PC-9 (cell line): ENCODE measurements at regions of chr13 and their contacts with region 1.

Region 1: DNA sequence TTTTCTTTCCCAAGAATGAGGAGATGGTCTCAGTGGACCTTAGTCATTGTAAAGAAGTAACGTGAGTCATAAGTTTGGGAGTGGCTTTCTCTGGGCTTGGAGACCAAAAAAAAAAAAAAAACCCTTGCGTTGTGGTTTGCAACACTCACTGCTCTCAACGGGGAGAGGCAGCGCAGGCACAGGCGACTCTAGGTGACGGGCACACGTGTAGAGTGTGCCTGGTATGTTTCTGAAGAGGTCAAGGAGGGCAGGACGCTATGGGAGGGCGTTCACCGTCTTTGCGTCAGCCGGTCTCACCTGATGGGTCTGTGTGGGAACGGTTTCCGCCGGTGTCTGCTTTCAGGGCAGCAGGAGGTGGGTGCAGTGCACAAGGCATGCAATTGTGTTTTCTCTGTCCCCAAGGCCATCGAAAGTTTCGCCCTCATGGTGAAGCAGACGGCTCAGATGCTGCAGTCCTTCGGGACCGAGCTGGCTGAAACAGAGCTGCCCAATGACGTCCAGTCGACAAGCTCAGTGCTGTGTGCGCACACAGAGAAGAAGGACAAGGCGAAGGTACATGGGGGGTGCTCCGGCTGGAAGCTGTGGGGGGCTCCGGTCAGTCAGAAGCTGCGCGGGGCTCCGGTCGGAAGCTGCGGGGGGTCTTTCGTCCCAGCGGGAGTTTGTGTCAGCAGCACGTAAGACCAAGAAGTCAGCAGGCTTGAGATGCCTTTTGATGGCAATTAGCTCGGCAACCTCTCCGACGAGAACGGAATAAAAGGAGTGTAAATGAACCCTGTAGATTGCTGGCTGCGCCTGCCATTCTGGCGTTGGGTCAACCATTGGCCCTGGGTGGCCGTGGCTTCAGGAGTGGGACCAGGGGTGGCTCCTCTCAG is 40.8 kb upstream of the F7 start:
- DNase-seq: peak; percentile 78 to 95
- H3K4me3 ChIP-seq: peak overlapping the region; percentile 18; the same call in 1 of the 2 replicates
- H3K27ac ChIP-seq: peak overlapping the region; percentile 69
- H3K4me1 ChIP-seq: peaks cover 13% of the 10 kb centered on the region
- H3K27me3 ChIP-seq: no peaks in the 10 kb centered on the region
- CTCF ChIP-seq: no peak

Region 2: GRCh38 chr13:112241288-112241687 is 823.5 kb before region 1 on chr13:
- CTCF ChIA-PET with region 1: no interaction called
- POLR2A ChIA-PET with region 1: no interaction called
- intact Hi-C with region 1: no loop called
- DNase-seq: no peak
- H3K4me3 ChIP-seq: no peak overlapping the region
- H3K27ac ChIP-seq: no peak overlapping the region
- H3K4me1 ChIP-seq: no peaks in the 10 kb centered on the region
- H3K27me3 ChIP-seq: peaks cover 95% of the 10 kb centered on the region
- CTCF ChIP-seq: no peak

Region 3: GRCh38 chr13:112910616-112911364 is 154.0 kb before region 1 on chr13:
- CTCF ChIA-PET with region 1: no interaction called
- POLR2A ChIA-PET with region 1: no interaction called
- intact Hi-C with region 1: no loop called
- DNase-seq: no peak
- H3K4me3 ChIP-seq: no peak overlapping the region
- H3K27ac ChIP-seq: no peak overlapping the region
- H3K4me1 ChIP-seq: no peaks in the 10 kb centered on the region
- H3K27me3 ChIP-seq: peaks cover 99% of the 10 kb centered on the region
- CTCF ChIP-seq: no peak

Region 4: DNA sequence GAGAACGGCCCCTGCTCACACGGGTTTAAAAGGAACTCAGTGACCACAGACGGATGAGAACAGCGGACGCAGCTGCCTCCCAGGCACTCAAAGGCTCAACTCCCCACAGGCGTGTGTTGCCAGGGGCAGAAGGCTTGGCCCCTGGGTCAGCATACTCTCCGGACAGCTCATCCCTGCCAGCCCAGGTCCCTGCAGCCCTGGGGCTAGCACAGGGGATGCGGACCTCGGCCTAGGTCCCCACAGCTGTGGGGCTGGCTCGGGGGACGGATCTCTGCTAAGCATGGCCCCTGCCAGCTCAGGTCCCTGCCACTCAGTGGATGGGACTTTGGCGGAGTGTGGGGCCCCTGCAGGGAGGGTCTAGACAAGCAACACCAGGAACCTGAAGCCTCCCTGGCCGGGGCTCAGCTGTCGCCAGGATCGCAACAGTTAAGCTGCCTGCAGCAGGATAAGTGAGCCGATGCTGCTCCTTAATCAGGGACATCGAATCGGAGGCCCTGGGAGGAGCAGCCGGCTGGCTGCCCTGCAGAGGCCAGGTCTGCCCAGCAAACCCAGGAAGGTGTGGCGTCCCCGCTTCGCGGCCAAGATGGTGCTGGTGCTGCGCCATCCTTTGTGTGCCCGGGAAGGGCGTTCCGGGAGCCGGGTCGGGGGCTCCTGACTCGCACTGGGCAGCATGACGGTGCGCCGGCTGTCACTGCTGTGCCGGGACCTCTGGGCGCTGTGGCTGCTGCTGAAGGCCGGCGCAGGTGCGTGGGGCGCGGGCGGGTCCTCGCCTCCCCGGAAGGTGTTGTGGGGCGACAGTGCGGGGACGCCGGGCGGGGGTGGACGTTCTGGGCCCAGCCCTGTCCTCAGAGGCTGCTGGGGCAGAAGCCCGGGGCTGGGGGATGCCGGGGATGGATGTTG is 63.3 kb before region 1 on chr13:
- CTCF ChIA-PET with region 1: no interaction called
- POLR2A ChIA-PET with region 1: no interaction called
- intact Hi-C with region 1: loop called (anchors 2 kb)
- DNase-seq: peak; percentile 90 to 91
- H3K4me3 ChIP-seq: peak overlapping the region; percentile 72
- H3K27ac ChIP-seq: peak overlapping the region; percentile 58
- H3K4me1 ChIP-seq: peaks cover 32% of the 10 kb centered on the region
- H3K27me3 ChIP-seq: no peaks in the 10 kb centered on the region
- CTCF ChIP-seq: no peak

Region 5: GRCh38 chr13:113022391-113023216 is 42.2 kb before region 1 on chr13:
- CTCF ChIA-PET with region 1: no interaction called
- POLR2A ChIA-PET with region 1: no interaction called
- intact Hi-C with region 1: loop called (anchors 2 kb)
- DNase-seq: peak; percentile 64 to 92
- H3K4me3 ChIP-seq: peak overlapping the region; percentile 68
- H3K27ac ChIP-seq: peak overlapping the region; percentile 72
- H3K4me1 ChIP-seq: peaks cover 33% of the 10 kb centered on the region
- H3K27me3 ChIP-seq: no peaks in the 10 kb centered on the region
- CTCF ChIP-seq: no peak

Region 6: GRCh38 chr13:113208424-113209335 is 143.9 kb after region 1 on chr13 and contains the start of gene PCID2:
- CTCF ChIA-PET with region 1: no interaction called
- POLR2A ChIA-PET with region 1: interaction called, 15 read pairs
- intact Hi-C with region 1: no loop called
- DNase-seq: peak; percentile 81 to 88
- H3K4me3 ChIP-seq: peak within 1 kb of the TSS; percentile 97
- H3K27ac ChIP-seq: peak within 1 kb of the TSS; percentile 90
- H3K4me1 ChIP-seq: peaks cover 40% of the 10 kb centered on the region
- H3K27me3 ChIP-seq: no peaks in the 10 kb centered on the region
- CTCF ChIP-seq: no peak
- total RNA-seq, gene PCID2: 48.3 and 71.8 TPM in 2 replicates

Region 7: GRCh38 chr13:113785051-113786010 is 720.6 kb after region 1 on chr13:
- CTCF ChIA-PET with region 1: no interaction called
- POLR2A ChIA-PET with region 1: no interaction called
- intact Hi-C with region 1: no loop called
- DNase-seq: peak; percentile 78 to 88
- H3K4me3 ChIP-seq: peak overlapping the region; percentile 12; the same call in 1 of the 2 replicates
- H3K27ac ChIP-seq: peak overlapping the region; percentile 62
- H3K4me1 ChIP-seq: peaks cover 29% of the 10 kb centered on the region
- H3K27me3 ChIP-seq: 0 out of 2 replicates have a peak, but pooled peaks cover 4% of the 10 kb centered on the region
- CTCF ChIP-seq: no peak